Activated CD4-positive, alpha-beta T cell treated with anti-CD3 and anti-CD28 coated beads for 36 hours (primary cell): ENCODE measurements at regions of chr15 and their contacts with region 1.

Region 1: DNA sequence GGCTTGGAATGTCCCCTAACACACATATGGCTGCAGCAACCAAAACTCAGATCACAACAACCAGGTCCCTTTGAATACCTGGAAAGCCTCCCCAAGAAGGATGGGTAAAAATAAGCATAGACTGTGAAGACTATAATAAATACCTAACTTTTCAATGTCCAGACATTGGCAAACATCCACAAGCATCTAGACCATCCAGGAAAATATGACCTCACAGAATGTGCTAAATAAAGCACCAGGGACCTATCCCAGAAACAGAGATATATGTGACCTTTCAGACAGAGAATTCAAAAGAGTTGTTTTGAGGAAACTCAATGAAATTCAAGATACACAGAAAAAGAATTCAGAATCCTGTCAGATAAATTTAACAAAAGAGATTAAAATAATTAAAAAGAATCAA is 109.2 kb downstream of the NEDD4 start:
- DNase-seq: no peak
- ATAC-seq: no peak
- H3K4me3 Mint-ChIP-seq: no peak overlapping the region
- H3K27ac Mint-ChIP-seq: no peak overlapping the region
- H3K4me1 Mint-ChIP-seq: no peaks in the 10 kb centered on the region
- H3K27me3 Mint-ChIP-seq: no peaks in the 10 kb centered on the region

Region 2: DNA sequence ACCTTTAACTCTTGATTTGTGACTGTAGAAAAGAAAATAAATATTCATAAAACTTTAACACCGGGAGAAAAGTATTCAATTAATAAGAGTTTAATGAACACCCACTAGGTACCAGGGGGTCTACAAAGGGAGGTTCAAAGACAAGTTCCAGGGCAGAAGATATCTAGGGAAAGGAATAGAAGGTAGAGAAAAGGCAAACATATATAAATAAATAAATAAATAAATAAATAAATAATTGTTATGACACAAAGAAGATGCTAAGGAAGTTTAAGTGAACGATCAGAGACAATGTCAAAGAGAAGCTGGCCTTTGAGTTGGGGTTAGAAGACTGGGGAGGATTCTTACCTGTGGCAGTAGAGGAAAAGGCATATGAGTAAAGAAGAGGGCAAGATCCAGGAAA is 14.6 kb before region 1 on chr15:
- CTCF ChIA-PET with region 1: no interaction called
- POLR2A ChIA-PET with region 1: no interaction called
- intact Hi-C with region 1: loop called in 1 of 2 experiments (anchors 1 kb)
- DNase-seq: no peak
- ATAC-seq: no peak
- H3K4me3 Mint-ChIP-seq: no peak overlapping the region
- H3K27ac Mint-ChIP-seq: no peak overlapping the region
- H3K4me1 Mint-ChIP-seq: peaks cover 2% of the 10 kb centered on the region
- H3K27me3 Mint-ChIP-seq: no peaks in the 10 kb centered on the region

Region 3: DNA sequence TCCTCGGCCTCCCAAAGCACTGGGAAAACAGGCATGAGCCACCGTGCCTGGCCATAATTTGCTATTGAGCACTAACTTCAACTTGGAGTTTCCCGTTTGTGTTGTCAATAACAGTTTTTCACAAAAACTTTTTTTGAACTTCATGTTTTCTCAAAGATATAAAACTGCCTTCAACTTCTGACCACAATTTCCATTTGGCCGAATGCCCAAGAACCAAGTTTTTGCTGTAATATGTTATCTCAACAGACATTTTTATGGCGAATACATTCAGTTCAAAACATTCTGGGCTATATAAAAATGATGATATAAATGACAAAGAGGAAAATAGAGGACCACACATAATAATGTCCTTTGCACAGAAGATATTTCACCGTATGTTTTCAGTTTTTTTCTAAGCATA is 52.8 kb after region 1 on chr15:
- CTCF ChIA-PET with region 1: no interaction called
- POLR2A ChIA-PET with region 1: no interaction called
- intact Hi-C with region 1: no loop called
- DNase-seq: no peak
- ATAC-seq: no peak
- H3K4me3 Mint-ChIP-seq: no peak overlapping the region
- H3K27ac Mint-ChIP-seq: no peak overlapping the region
- H3K4me1 Mint-ChIP-seq: no peaks in the 10 kb centered on the region
- H3K27me3 Mint-ChIP-seq: no peaks in the 10 kb centered on the region